B cell (primary cell): ENCODE measurements at regions of chr2 and their contacts with region 1.

Region 1: DNA sequence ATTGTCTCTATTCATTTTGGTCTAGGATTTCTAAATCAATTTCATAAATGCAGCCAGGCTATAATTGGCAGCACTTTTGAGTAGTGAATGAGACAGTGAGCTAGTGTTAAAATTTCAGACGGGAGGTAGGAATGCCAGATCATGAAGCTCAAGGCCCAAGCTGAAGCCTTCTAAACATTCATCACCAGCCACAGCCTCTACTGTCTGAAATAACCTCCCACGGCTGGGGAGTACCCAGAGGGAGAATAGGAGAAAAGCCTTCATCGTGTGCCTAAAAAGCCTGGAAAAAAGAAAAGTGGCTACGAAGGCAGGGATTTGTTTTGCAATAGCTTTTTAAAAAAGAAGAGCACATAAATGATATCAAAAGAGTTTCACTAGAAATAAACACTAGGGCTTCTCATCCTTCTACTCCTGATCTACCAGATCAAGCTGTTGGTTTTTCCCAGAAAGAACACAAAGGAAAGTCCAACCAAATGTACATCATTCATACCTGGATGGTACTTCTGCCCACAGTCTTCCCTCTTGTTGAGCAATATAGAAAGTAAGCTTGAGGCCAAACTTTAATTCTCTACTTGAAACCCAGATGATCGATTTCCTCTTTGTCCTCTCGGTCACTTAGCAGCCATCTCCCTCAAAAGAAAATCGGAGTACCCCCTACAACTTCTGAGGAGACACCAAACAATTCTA is 48.1 kb upstream of the SLC39A10 start:
- DNase-seq: no peak
- ATAC-seq: no peak
- H3K4me3 ChIP-seq: no peak overlapping the region
- H3K4me3 Mint-ChIP-seq: no peak overlapping the region
- H3K27ac ChIP-seq: no peak overlapping the region
- H3K27ac Mint-ChIP-seq: no peak overlapping the region
- H3K4me1 ChIP-seq: peaks cover 6 to 16% of the 10 kb centered on the region in 2 donors
- H3K4me1 Mint-ChIP-seq: peaks cover 34% of the 10 kb centered on the region
- H3K27me3 ChIP-seq: no peaks in the 10 kb centered on the region
- H3K27me3 Mint-ChIP-seq: no peaks in the 10 kb centered on the region
- CTCF ChIP-seq: no peak

Region 2: DNA sequence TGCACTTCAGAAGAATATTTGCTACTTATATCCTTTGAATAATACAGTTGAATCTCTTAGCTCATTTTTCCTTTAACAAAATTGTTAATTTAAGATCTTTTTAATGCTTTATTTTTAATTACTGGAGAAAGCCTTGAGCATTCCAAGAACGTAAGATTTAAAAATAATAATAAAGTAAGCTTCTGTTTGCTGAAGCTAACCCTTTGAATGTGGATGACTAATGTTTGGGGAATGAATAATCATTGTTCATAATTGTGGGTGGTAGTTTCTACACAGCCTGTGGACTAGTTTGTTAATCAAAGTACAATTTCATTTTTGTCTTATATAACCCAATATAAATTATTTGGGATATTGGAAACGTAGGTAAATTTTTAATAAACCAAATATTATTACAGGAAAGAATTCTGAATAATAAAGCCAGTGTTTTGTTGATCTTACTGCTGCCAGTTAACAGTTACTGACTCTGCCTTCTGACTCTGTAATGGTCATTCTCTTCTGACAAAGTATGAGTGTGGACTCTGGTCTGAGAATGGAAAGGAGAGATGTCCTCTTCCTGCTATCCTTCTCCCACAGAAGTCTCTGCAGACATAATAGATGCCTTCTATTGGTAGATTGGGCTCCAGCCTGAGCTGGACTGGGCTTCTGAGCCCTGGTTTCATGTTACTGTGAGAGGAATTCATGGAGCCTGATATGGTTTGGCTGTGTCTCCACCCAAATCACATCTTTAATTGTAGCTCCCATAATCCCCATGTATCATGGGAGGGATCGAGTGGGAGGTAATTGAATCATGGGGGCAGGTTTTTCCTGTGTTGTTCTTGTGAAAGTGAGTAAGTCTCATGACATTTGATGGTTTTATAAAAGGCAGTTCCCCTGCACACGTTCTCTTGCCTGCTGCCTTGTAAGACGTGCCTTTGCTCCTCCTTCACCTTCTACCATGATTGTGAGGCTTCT is 244.6 kb before region 1 on chr2:
- CTCF ChIA-PET with region 1: no interaction called
- POLR2A ChIA-PET with region 1: no interaction called
- intact Hi-C with region 1: no loop called
- DNase-seq: no peak
- ATAC-seq: no peak
- H3K4me3 ChIP-seq: no peak overlapping the region
- H3K4me3 Mint-ChIP-seq: no peak overlapping the region
- H3K27ac ChIP-seq: no peak overlapping the region
- H3K27ac Mint-ChIP-seq: no peak overlapping the region
- H3K4me1 ChIP-seq: no peaks in the 10 kb centered on the region
- H3K4me1 Mint-ChIP-seq: no peaks in the 10 kb centered on the region
- H3K27me3 ChIP-seq: no peaks in the 10 kb centered on the region
- H3K27me3 Mint-ChIP-seq: no peaks in the 10 kb centered on the region
- CTCF ChIP-seq: no peak

Region 3: GRCh38 chr2:195619590-195619989 is 10.7 kb after region 1 on chr2:
- CTCF ChIA-PET with region 1: interaction called, 3 read pairs
- POLR2A ChIA-PET with region 1: interaction called, 7 read pairs
- intact Hi-C with region 1: loop called (anchors 2 kb)
- DNase-seq: no peak
- ATAC-seq: no peak
- H3K4me3 ChIP-seq: no peak overlapping the region
- H3K4me3 Mint-ChIP-seq: no peak overlapping the region
- H3K27ac ChIP-seq: no peak overlapping the region
- H3K27ac Mint-ChIP-seq: no peak overlapping the region
- H3K4me1 ChIP-seq: no peaks in the 10 kb centered on the region
- H3K4me1 Mint-ChIP-seq: peaks cover 9% of the 10 kb centered on the region
- H3K27me3 ChIP-seq: no peaks in the 10 kb centered on the region
- H3K27me3 Mint-ChIP-seq: no peaks in the 10 kb centered on the region
- CTCF ChIP-seq: no peak

Region 4: GRCh38 chr2:195642027-195642676 is 33.2 kb after region 1 on chr2:
- CTCF ChIA-PET with region 1: no interaction called
- POLR2A ChIA-PET with region 1: no interaction called
- intact Hi-C with region 1: loop called (anchors 5 kb)
- DNase-seq: no peak
- ATAC-seq: no peak
- H3K4me3 ChIP-seq: no peak overlapping the region
- H3K4me3 Mint-ChIP-seq: no peak overlapping the region
- H3K27ac ChIP-seq: no peak overlapping the region
- H3K27ac Mint-ChIP-seq: no peak overlapping the region
- H3K4me1 ChIP-seq: peaks cover 16 to 18% of the 10 kb centered on the region in 2 donors
- H3K4me1 Mint-ChIP-seq: peaks cover 31% of the 10 kb centered on the region
- H3K27me3 ChIP-seq: no peaks in the 10 kb centered on the region
- H3K27me3 Mint-ChIP-seq: no peaks in the 10 kb centered on the region
- CTCF ChIP-seq: no peak